ENCODE measurements at regions of chr13 and their contacts with region 1.

Region 1: GRCh38 chr13:30802953-30803478 is 67.7 kb downstream of the ALOX5AP start:
- DNase-seq: peak; percentile 39
- ATAC-seq: peak; percentile 84
- H3K4me3 ChIP-seq: peak overlapping the region in 1 of 3 experiments; percentile 25; a peak in 1 of 6 replicates
- H3K27ac ChIP-seq: no peak overlapping the region
- H3K4me1 ChIP-seq: peaks cover 59% of the 10 kb centered on the region
- H3K27me3 ChIP-seq: no peaks in the 10 kb centered on the region; a peak in 1 of 5 replicates
- CTCF ChIP-seq: peak; percentile 95
- EP300 ChIP-seq: no peak
- POLR2A ChIP-seq: no peak
- RAD21 ChIP-seq: peak; percentile 90

Region 2: GRCh38 chr13:30355384-30355699 is 447.7 kb before region 1 on chr13:
- CTCF ChIA-PET with region 1: no interaction called
- POLR2A ChIA-PET with region 1: no interaction called
- in situ Hi-C with region 1: no loop called
- intact Hi-C with region 1: loop called (anchors 10 kb)
- DNase-seq: peak; percentile 49
- ATAC-seq: peak; percentile 99
- H3K4me3 ChIP-seq: no peak overlapping the region; a peak in 1 of 6 replicates
- H3K27ac ChIP-seq: no peak overlapping the region
- H3K4me1 ChIP-seq: peaks cover 10% of the 10 kb centered on the region
- H3K27me3 ChIP-seq: peaks cover 0 to 2% of the 10 kb centered on the region in 2 experiments; a peak in 1 of 5 replicates
- CTCF ChIP-seq: peak; percentile 80
- EP300 ChIP-seq: no peak
- POLR2A ChIP-seq: no peak
- RAD21 ChIP-seq: peak; percentile 60

Region 3: DNA sequence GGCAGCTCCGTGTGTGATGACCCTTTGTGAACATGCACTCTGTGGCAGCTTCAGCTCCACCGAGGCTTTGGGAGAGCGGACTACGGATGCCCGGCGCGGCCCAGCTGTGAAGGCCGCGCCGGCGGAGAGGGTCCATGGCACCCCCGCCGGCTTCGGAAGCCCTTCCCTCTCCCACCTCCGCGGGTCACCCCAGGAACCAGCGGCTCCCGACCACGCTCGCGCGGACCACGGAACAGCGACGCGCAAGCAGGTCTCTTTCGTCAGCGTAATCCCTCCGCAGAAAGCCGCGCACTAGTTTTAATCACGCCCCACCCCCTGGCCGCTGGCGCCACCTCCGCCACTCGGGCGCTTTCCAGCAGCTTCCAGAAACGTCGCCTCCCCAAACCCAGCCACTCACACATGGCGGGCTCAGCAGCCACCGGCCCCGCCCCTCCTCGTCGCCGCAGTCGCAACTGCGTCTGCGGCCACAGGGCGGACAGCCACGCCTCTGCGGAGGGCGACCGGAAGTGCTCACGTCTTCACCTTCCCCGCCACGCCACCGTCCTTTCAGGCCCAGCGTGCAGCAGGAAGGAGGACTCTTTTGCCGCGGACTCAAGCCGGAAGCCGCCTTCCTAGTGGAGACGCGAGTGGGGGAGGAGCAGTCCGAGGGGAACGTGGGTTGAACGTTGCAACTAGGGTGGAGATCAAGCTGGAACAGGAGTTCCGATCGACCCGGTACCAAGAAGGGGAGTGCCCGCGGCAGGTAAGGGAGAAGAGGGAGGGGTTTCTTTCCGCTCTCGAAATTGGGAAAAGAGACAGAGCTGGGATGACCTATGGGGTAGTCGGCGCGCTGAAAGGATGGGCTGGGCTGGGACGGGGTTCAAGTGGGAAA is 185.5 kb before region 1 on chr13 and contains the start of gene USPL1:
- CTCF ChIA-PET with region 1: no interaction called
- POLR2A ChIA-PET with region 1: interaction called, 3 read pairs
- in situ Hi-C with region 1: no loop called
- intact Hi-C with region 1: loop called (anchors 2 kb)
- DNase-seq: peak; percentile 94
- ATAC-seq: peak; percentile 93
- H3K4me3 ChIP-seq: peak within 1 kb of the TSS; percentile 72 to 89 (median 81)
- H3K27ac ChIP-seq: peak within 1 kb of the TSS; percentile 99
- H3K4me1 ChIP-seq: peaks cover 34% of the 10 kb centered on the region
- H3K27me3 ChIP-seq: no peaks in the 10 kb centered on the region; a peak in 1 of 5 replicates
- CTCF ChIP-seq: peak; percentile 58
- EP300 ChIP-seq: peak; percentile 22 to 91; a peak in 3 of 4 replicates
- POLR2A ChIP-seq: peak in 1 of 2 experiments; percentile 90
- RAD21 ChIP-seq: peak; percentile 61
- total RNA-seq, gene USPL1: 13.7 and 18.3 TPM in 2 replicates

Region 4: DNA sequence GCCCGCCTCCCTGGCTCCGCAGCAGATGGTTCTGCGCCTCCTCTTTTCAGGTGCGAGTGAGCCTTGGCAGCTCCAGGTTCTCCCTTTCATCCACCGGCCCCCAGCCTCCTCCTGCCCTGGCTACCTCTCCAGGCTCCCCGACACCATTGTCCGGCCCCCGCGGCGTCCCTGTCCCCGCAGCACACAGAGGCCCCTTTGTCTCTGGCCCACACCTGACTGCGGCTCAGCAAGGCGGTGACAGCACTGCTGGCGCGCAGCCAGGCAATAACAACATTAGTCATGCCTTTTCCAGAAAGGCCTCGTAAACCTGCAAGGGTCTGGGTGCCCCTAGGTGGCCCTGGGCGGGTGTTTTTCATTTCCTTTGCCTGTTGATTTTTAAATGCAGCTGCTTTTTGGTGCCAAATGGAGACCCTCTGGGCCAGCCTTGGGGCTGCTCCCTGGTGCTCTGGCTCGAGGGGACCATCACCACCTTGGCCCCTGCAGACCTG is 29.9 kb after region 1 on chr13:
- CTCF ChIA-PET with region 1: no interaction called
- POLR2A ChIA-PET with region 1: interaction called, 10 read pairs
- in situ Hi-C with region 1: no loop called
- intact Hi-C with region 1: loop called (anchors 1 kb)
- DNase-seq: peak; percentile 97
- ATAC-seq: peak; percentile 95
- H3K4me3 ChIP-seq: peak overlapping the region in 1 of 3 experiments; percentile 56; a peak in 2 of 6 replicates
- H3K27ac ChIP-seq: peak overlapping the region; percentile 74
- H3K4me1 ChIP-seq: peaks cover 84% of the 10 kb centered on the region
- H3K27me3 ChIP-seq: no peaks in the 10 kb centered on the region
- CTCF ChIP-seq: peak; percentile 37; the same call in 1 of the 2 replicates
- EP300 ChIP-seq: peak; percentile 17 to 84; a peak in 3 of 4 replicates
- POLR2A ChIP-seq: no peak
- RAD21 ChIP-seq: no peak

Region 5: GRCh38 chr13:30865123-30866049 is 62.4 kb after region 1 on chr13:
- CTCF ChIA-PET with region 1: interaction called, 3 read pairs
- POLR2A ChIA-PET with region 1: interaction called, 4 read pairs
- in situ Hi-C with region 1: loop called (anchors 5 kb)
- intact Hi-C with region 1: loop called (anchors 1 kb)
- DNase-seq: peak; percentile 80
- ATAC-seq: peak; percentile 97
- H3K4me3 ChIP-seq: peak overlapping the region in 2 of 3 experiments; percentile 40 to 54; a peak in 3 of 6 replicates
- H3K27ac ChIP-seq: peak overlapping the region; percentile 7
- H3K4me1 ChIP-seq: peaks cover 64% of the 10 kb centered on the region
- H3K27me3 ChIP-seq: no peaks in the 10 kb centered on the region; a peak in 1 of 5 replicates
- CTCF ChIP-seq: peak; percentile 97
- EP300 ChIP-seq: no peak
- POLR2A ChIP-seq: peak in 1 of 2 experiments; percentile 21; a peak in 1 of 4 replicates
- RAD21 ChIP-seq: peak; percentile 93